Activated B cell treated with CpG ODN at 0.5 μM for 24 hours (primary cell): ENCODE measurements at regions of chr4 and their contacts with region 1.

Region 1: DNA sequence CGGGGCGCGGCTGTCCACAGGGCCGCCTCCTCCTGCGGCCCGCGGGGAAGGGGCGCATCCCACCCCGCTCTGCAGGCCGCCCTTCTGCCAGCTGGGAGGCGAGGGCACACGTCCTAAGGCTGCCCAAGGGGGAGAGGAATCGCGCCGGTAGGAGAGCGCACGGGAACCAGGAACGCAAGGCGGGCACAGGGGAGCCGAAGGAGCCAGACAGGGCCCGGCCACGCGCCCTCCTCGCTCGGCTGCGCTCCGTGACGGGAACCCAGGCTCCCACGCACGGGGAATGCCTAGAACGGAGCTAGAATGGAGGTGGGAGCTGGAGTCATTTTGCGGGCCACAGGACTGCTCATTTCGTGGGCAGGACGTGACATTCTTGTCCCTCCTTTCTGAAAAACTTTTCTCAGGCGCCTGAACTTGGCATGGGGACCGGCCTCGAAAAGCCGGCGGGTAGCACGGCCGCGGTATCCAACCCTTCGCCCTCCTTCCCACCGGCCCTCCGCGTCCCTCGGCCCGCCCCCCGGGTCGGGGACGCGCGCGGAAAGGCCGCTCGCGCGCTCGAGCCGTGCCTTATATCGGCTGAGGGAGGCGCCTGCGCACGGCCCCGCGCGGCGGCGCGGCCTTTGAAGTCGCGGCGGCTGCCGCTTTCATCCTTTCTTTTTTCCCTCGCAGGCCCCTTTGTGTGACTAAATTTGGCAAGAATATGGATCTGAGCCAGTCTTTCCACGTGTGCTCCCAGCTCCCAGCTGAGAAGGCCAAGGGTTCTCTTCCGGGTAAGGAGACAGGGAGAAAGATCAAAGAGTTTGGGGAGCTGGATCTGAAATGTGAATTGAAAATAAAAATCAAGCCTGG is 4.2 kb upstream of the LEF1 start:
- DNase-seq: peak; percentile 26
- ATAC-seq: peak; percentile 63
- H3K4me3 Mint-ChIP-seq: peak overlapping the region; percentile 82
- H3K27ac Mint-ChIP-seq: no peak overlapping the region
- H3K4me1 Mint-ChIP-seq: peaks cover 42% of the 10 kb centered on the region
- H3K27me3 Mint-ChIP-seq: peaks cover 52% of the 10 kb centered on the region
- CTCF ChIP-seq: no peak

Region 2: DNA sequence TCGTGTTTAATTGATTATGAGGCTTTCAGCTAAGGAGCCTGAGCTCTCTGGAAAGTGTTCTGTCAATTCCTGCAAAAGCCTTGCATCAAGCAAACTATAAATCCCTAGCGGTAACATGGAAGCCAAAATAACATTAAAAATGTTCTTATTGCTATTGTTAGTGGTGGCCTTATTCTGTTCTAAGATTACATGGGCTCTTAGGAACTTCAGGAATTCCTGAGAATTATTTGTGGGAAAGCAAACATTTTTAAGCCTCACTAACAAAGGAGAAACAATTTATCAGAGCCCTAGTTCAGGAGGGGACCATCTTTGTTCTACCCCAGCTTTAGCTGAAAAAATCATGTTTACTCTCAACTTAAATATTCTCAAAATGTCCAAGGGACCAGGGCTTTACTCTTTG is 572.5 kb before region 1 on chr4:
- CTCF ChIA-PET with region 1: no interaction called
- POLR2A ChIA-PET with region 1: no interaction called
- intact Hi-C with region 1: no loop called
- DNase-seq: no peak
- ATAC-seq: no peak
- H3K4me3 Mint-ChIP-seq: no peak overlapping the region
- H3K27ac Mint-ChIP-seq: no peak overlapping the region
- H3K4me1 Mint-ChIP-seq: no peaks in the 10 kb centered on the region
- H3K27me3 Mint-ChIP-seq: peaks cover 2% of the 10 kb centered on the region
- CTCF ChIP-seq: no peak

Region 3: GRCh38 chr4:107719922-107720722 is 452.9 kb before region 1 on chr4 and contains the start of gene PAPSS1:
- CTCF ChIA-PET with region 1: no interaction called
- POLR2A ChIA-PET with region 1: no interaction called
- intact Hi-C with region 1: loop called (anchors 10 kb)
- DNase-seq: peak; percentile 92
- ATAC-seq: peak; percentile 87
- H3K4me3 Mint-ChIP-seq: peak within 1 kb of the TSS; percentile 97
- H3K27ac Mint-ChIP-seq: peak within 1 kb of the TSS; percentile 96
- H3K4me1 Mint-ChIP-seq: peaks cover 34% of the 10 kb centered on the region
- H3K27me3 Mint-ChIP-seq: no peaks in the 10 kb centered on the region
- CTCF ChIP-seq: no peak
- total RNA-seq, gene PAPSS1: 31.8 and 34.2 TPM in 2 replicates

Region 4: DNA sequence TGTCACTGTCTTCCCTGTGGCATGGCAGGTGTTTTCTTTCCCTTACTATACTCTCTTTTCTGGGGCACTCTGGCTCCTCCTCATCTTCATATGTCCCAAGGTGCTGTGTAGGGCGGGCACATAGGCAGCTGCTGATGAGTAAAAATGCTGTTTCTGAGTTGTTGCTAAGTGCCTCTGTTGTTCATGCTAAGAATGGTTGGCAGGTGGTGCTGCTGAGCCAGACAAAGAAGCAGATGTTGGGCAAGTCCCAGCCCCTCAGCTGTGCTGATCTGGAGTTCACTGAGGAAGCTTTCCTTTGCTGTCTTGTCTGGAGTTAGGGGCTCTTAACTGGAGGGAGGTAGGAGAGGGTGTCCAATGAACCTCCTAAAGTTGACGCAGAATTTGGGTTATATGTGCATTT is 142.6 kb before region 1 on chr4:
- CTCF ChIA-PET with region 1: no interaction called
- POLR2A ChIA-PET with region 1: no interaction called
- intact Hi-C with region 1: loop called (anchors 5 kb)
- DNase-seq: no peak
- ATAC-seq: no peak
- H3K4me3 Mint-ChIP-seq: no peak overlapping the region
- H3K27ac Mint-ChIP-seq: no peak overlapping the region
- H3K4me1 Mint-ChIP-seq: peaks cover 3% of the 10 kb centered on the region
- H3K27me3 Mint-ChIP-seq: no peaks in the 10 kb centered on the region
- CTCF ChIP-seq: no peak

Region 5: GRCh38 chr4:108118490-108118889 is 54.5 kb before region 1 on chr4:
- CTCF ChIA-PET with region 1: no interaction called
- POLR2A ChIA-PET with region 1: no interaction called
- intact Hi-C with region 1: loop called (anchors 5 kb)
- DNase-seq: no peak
- ATAC-seq: no peak
- H3K4me3 Mint-ChIP-seq: no peak overlapping the region
- H3K27ac Mint-ChIP-seq: no peak overlapping the region
- H3K4me1 Mint-ChIP-seq: peaks cover 18% of the 10 kb centered on the region
- H3K27me3 Mint-ChIP-seq: no peaks in the 10 kb centered on the region
- CTCF ChIP-seq: no peak